Left lung (tissue), 14 donors: ENCODE measurements at regions of chr20 and their contacts with region 1.

Region 1: GRCh38 chr20:5191829-5192569 is 65.2 kb downstream of the CDS2 start:
- DNase-seq: peak in 2 of 4 donors; percentile 60 to 74
- ATAC-seq: peak; percentile 93
- H3K4me3 ChIP-seq: no peak overlapping the region
- H3K27ac ChIP-seq: peak overlapping the region in 1 of 2 donors; percentile 18
- H3K4me1 ChIP-seq: peaks cover 0 to 5% of the 10 kb centered on the region in 2 donors
- H3K27me3 ChIP-seq: no peaks in the 10 kb centered on the region
- CTCF ChIP-seq: peak; percentile 51 to 74

Region 2: DNA sequence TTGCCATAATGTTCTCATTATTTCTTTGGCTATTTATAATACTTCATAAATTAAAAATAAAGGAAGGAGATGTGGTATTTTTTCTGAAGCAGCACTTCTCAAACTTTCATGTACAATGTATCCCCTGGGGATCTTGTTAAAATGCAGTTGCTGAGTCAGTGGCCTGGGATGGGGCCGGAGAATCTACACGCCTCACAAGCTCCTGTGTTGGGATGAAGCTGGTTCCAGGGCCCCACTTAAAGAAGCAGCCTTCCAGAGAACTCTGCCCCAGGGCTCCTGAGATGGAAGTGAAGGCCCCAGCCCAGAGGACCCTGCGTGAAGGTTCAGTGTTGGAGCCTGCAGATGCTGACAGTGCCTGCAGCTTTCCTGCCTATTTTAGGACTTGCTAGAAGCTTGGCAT is 150.6 kb before region 1 on chr20:
- intact Hi-C with region 1: no loop called
- DNase-seq: no peak
- ATAC-seq: no peak
- H3K4me3 ChIP-seq: no peak overlapping the region
- H3K27ac ChIP-seq: no peak overlapping the region
- H3K4me1 ChIP-seq: peaks cover 0 to 6% of the 10 kb centered on the region in 2 donors
- H3K27me3 ChIP-seq: no peaks in the 10 kb centered on the region
- CTCF ChIP-seq: no peak

Region 3: DNA sequence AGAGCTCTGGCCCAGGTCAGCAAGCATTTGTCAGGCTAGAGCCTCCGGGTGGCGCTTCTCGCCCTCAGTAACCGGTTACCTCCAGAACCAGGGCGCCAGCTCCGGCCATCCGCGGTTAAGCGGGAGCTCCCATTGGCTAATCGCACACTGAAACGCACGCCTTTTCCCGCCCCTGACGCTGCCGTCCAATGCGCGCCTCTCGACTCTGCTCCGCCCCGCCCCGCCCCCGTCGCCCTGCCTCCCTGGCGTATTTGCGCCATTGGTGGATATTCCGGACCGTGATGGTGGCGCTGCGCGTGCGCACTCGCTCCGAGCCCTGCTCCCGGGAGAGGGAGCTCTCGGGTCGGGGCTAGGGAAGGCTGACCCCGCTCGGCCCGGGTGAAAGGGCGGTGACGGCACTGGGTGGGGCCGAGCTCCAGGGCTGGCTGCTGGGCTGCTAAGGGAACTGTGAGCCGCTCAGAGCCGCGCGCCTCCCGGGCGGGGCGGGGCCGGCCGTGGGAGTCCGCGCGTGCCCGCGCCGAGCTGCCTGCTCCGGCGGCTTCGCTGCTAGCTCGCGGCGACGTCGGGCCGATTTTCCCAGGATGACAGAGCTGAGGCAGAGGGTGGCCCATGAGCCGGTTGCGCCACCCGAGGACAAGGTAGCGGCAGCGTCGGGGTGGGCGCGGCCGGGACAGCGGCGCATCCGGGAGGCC is 65.3 kb before region 1 on chr20 and contains the start of gene CDS2:
- intact Hi-C with region 1: loop called in 1 of 2 experiments (anchors 5 kb)
- DNase-seq: peak; percentile 98 to 100 (median 100)
- ATAC-seq: peak; percentile 97
- H3K4me3 ChIP-seq: peak within 1 kb of the TSS; percentile 93 to 94
- H3K27ac ChIP-seq: peak within 1 kb of the TSS; percentile 93 to 97
- H3K4me1 ChIP-seq: peaks cover 14 to 33% of the 10 kb centered on the region in 2 donors
- H3K27me3 ChIP-seq: no peaks in the 10 kb centered on the region
- CTCF ChIP-seq: peak; percentile 52 to 63
- polyA plus RNA-seq, gene CDS2: 26.7 to 32.4 (median 29.9) TPM